Right ventricle myocardium superior (tissue), 1 donor: ENCODE measurements at regions of chr4 and their contacts with region 1.

Region 1: DNA sequence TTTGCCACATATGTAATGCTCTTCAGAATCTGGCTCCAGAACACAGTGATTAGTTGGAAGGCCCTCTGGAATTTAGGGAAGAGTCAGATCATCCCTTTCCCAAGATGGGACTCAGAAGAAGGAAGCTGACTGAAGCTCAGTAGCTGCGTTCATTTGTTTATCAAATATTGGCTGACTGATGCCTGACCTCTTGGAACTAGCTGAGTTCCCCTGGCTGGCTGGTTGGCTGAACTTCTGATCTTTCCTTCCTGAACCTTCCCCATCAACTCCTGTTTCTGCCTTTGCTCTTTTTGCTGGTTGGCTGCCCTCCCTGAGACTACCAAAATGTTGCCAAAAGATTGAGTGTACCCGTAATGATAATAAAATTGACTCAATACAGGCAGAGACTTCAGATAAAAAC is 866.5 kb upstream of the INTU start:
- DNase-seq: peak; percentile 51
- ATAC-seq: peak; percentile 95

Region 2: DNA sequence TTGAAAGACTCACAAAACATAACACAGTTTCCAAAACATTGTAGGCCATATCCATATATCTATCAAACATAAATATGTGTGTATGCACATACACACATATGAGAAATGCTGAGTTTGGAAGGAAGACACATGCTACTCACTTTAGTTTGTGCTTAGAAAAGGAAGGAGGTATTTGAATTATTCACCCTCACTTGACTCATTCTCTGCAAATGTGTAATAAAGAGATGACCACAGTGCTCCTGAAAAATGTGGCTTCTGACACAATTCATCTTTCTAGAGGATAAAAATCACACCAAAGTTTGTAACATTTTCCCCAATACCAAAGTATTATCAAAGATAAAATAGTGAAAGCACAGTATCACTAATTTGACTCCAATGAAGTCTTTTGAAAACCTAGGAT is 501.4 kb before region 1 on chr4:
- intact Hi-C with region 1: no loop called
- DNase-seq: no peak
- ATAC-seq: no peak

Region 3: DNA sequence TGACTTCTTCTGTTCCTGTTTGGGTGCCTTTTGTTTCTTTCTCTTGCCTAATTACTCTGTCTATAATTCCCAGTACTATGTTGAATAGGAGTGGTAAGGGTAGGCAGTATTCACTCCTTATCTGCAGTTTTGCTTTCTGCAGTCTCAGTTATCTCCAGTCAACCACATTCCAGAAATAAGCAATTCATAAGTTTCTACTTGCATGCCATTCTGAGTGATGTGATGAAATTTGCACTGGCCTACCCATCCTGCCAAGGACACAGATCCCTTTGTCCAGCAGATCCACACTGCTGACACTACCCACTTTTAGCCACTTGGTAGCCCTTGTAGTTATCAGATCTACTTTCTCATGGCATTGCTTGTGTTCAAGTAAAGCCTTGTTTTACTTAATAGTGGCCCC is 105.0 kb before region 1 on chr4:
- intact Hi-C with region 1: loop called (anchors 10 kb)
- DNase-seq: no peak
- ATAC-seq: peak; percentile 76

Region 4: GRCh38 chr4:126899331-126899801 is 133.1 kb after region 1 on chr4:
- intact Hi-C with region 1: no loop called
- DNase-seq: peak; percentile 40
- ATAC-seq: peak; percentile 97